Mammary epithelial cell (primary cell): ENCODE measurements at regions of chr4 and their contacts with region 1.

Region 1: DNA sequence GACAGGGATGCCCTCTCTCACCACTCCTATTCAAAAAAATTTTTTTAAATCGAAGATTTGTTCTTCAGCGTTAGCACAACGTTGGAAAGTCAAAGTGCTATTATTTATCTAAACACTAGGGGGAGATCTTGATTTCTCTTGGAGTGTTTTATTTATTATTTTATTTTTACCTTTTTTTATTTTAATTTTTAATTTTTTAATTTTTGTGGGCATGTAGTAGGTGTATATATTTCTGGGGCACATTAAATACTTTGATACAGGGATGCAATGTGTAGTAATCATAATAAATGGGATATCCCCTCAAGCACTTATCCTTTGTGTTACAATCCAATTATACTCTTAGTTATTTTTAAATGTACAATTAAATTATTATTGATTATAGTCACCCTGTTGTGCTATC is 37.4 kb upstream of the SLC10A4 start:
- DNase-seq: no peak
- H3K4me3 ChIP-seq: no peak overlapping the region
- H3K27ac ChIP-seq: no peak overlapping the region
- H3K4me1 ChIP-seq: no peaks in the 10 kb centered on the region
- H3K27me3 ChIP-seq: no peaks in the 10 kb centered on the region
- CTCF ChIP-seq: peak; percentile 45 to 49

Region 2: DNA sequence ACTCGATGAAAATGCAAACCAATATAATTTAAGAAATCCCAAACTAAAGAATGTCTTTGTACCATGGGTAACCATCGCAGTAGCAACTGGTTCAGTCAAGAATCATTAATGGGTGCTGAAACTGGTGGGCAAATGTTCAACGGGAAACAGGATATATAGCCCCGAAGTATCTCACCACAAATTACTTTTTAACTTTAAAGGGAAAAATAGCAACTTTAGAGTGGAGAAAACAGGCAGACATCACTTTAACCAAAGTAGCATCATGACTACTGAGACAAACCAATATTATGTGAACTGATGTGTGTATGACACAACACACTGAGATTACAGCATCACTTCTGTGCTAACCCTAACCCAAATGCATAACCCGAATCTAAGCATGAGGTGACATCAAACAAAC is 138.2 kb before region 1 on chr4:
- CTCF ChIA-PET with region 1: no interaction called
- dilution Hi-C with region 1: no loop called
- in situ Hi-C with region 1: no loop called
- intact Hi-C with region 1: no loop called
- DNase-seq: no peak
- H3K4me3 ChIP-seq: no peak overlapping the region
- H3K27ac ChIP-seq: no peak overlapping the region
- H3K4me1 ChIP-seq: no peaks in the 10 kb centered on the region
- H3K27me3 ChIP-seq: peaks cover 2% of the 10 kb centered on the region
- CTCF ChIP-seq: no peak

Region 3: GRCh38 chr4:48470137-48470536 is 24.4 kb after region 1 on chr4:
- CTCF ChIA-PET with region 1: interaction called, 10 read pairs
- dilution Hi-C with region 1: no loop called
- in situ Hi-C with region 1: no loop called
- intact Hi-C with region 1: no loop called
- DNase-seq: no peak
- H3K4me3 ChIP-seq: no peak overlapping the region
- H3K27ac ChIP-seq: no peak overlapping the region
- H3K4me1 ChIP-seq: no peaks in the 10 kb centered on the region
- H3K27me3 ChIP-seq: no peaks in the 10 kb centered on the region
- CTCF ChIP-seq: no peak

Region 4: GRCh38 chr4:48546336-48546735 is 100.6 kb after region 1 on chr4:
- CTCF ChIA-PET with region 1: no interaction called
- dilution Hi-C with region 1: no loop called
- in situ Hi-C with region 1: no loop called
- intact Hi-C with region 1: loop called (anchors 1 kb)
- DNase-seq: peak; percentile 3
- H3K4me3 ChIP-seq: no peak overlapping the region
- H3K27ac ChIP-seq: no peak overlapping the region
- H3K4me1 ChIP-seq: no peaks in the 10 kb centered on the region
- H3K27me3 ChIP-seq: no peaks in the 10 kb centered on the region
- CTCF ChIP-seq: peak; percentile 45 to 52

Region 5: DNA sequence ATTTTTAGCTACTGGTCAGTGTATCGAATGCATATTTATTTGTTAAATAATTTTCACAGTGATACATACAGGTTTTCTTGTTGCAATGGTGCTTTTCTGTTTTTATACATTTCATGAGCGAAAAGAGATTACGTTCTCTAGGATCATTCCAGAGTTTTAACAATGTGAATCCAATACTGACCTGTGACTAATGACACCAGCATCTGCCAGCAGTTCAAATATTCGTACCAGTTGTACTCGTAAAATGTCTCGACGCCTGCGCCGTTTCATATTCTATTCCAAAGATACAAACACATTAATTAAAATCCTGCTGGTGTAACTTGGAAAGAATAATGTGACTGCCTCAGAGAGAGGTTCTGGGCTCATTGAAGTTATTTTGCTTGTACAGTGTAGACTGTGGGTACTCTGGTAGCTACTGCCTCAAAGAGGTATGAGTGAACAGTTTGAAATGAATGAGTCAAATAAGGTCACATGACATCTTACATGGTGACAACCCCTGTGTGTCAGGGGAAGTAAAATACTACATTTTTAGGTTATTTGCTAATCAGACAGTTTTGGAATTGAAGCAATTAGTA is 125.0 kb after region 1 on chr4:
- CTCF ChIA-PET with region 1: interaction called, 13 read pairs
- dilution Hi-C with region 1: no loop called
- in situ Hi-C with region 1: no loop called
- intact Hi-C with region 1: no loop called
- DNase-seq: peak; percentile 38
- H3K4me3 ChIP-seq: no peak overlapping the region
- H3K27ac ChIP-seq: no peak overlapping the region
- H3K4me1 ChIP-seq: no peaks in the 10 kb centered on the region
- H3K27me3 ChIP-seq: no peaks in the 10 kb centered on the region
- CTCF ChIP-seq: no peak